Activated CD4-positive, alpha-beta memory T cell treated with anti-CD3 and anti-CD28 coated beads for 36 hours (primary cell): ENCODE measurements at regions of chr12 and their contacts with region 1.

Region 1: GRCh38 chr12:31117203-31118011 is 43.7 kb downstream of the DDX11 start:
- DNase-seq: peak; percentile 70
- H3K4me3 Mint-ChIP-seq: peak overlapping the region; percentile 64
- H3K27ac Mint-ChIP-seq: no peak overlapping the region
- H3K4me1 Mint-ChIP-seq: peaks cover 16% of the 10 kb centered on the region
- H3K27me3 Mint-ChIP-seq: peaks cover 35% of the 10 kb centered on the region

Region 2: GRCh38 chr12:31106101-31106803 is 11.2 kb before region 1 on chr12:
- CTCF ChIA-PET with region 1: no interaction called
- POLR2A ChIA-PET with region 1: no interaction called
- intact Hi-C with region 1: no loop called
- DNase-seq: no peak
- H3K4me3 Mint-ChIP-seq: no peak overlapping the region
- H3K27ac Mint-ChIP-seq: no peak overlapping the region
- H3K4me1 Mint-ChIP-seq: no peaks in the 10 kb centered on the region
- H3K27me3 Mint-ChIP-seq: peaks cover 6% of the 10 kb centered on the region

Region 3: DNA sequence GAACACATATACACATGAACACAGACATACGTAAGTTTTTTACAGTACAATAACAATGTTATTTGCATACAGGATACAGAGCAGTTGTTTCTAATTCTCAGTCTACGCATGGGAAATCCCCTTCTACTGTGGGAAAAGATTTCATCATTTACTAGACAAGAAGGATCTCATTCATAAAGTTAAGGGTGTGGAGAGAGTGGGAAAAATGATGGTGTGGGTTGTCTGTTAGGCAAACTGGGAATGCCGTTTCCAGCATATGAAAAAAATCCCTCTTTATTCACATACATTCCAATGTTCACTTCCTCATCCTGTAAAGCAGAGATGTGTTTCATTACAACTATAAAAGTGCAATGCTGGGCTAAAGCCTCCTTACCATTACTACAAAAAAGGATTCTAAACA is 87.6 kb after region 1 on chr12:
- CTCF ChIA-PET with region 1: no interaction called
- POLR2A ChIA-PET with region 1: no interaction called
- intact Hi-C with region 1: loop called (anchors 5 kb)
- DNase-seq: no peak
- H3K4me3 Mint-ChIP-seq: no peak overlapping the region
- H3K27ac Mint-ChIP-seq: no peak overlapping the region
- H3K4me1 Mint-ChIP-seq: peaks cover 12% of the 10 kb centered on the region
- H3K27me3 Mint-ChIP-seq: peaks cover 22% of the 10 kb centered on the region

Region 4: GRCh38 chr12:31238764-31239387 is 121.5 kb after region 1 on chr12:
- CTCF ChIA-PET with region 1: interaction called, 3 read pairs
- POLR2A ChIA-PET with region 1: no interaction called
- intact Hi-C with region 1: loop called (anchors 2 kb)
- DNase-seq: peak; percentile 84
- H3K4me3 Mint-ChIP-seq: no peak overlapping the region
- H3K27ac Mint-ChIP-seq: no peak overlapping the region
- H3K4me1 Mint-ChIP-seq: peaks cover 10% of the 10 kb centered on the region
- H3K27me3 Mint-ChIP-seq: peaks cover 12% of the 10 kb centered on the region